Thyroid gland (tissue), 4 donors: ENCODE measurements at regions of chr19 and their contacts with region 1.

Region 1: GRCh38 chr19:37564624-37565369 is 29.8 kb downstream of the ZNF571 start:
- DNase-seq: no peak
- H3K4me3 ChIP-seq: no peak overlapping the region
- H3K27ac ChIP-seq: no peak overlapping the region
- H3K4me1 ChIP-seq: no peaks in the 10 kb centered on the region
- H3K27me3 ChIP-seq: no peaks in the 10 kb centered on the region
- CTCF ChIP-seq: no peak
- POLR2A ChIP-seq: no peak

Region 2: GRCh38 chr19:36891768-36892357 is 672.9 kb before region 1 on chr19:
- intact Hi-C with region 1: loop called (anchors 5 kb)
- DNase-seq: no peak
- H3K4me3 ChIP-seq: no peak overlapping the region
- H3K27ac ChIP-seq: no peak overlapping the region
- H3K4me1 ChIP-seq: no peaks in the 10 kb centered on the region
- H3K27me3 ChIP-seq: no peaks in the 10 kb centered on the region
- CTCF ChIP-seq: no peak
- POLR2A ChIP-seq: no peak

Region 3: DNA sequence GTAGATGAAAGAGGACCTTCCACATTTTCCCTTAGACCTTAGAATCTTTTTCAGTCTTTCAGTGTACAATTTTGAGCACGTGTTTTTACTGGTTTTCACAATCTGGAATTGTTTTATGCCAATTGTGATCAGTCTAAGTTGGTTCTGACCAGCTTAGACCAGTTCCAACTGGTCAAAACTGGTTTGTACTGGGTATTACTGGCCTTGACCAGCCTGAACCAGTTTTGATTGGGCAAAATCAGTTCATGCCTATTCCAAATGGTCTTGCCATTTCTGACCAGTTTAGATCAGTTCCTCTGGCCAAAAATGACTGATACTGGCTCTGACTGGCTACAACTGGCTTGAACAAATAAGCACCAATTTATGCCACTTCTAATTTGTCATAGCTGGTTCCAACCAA is 428.7 kb before region 1 on chr19:
- intact Hi-C with region 1: loop called (anchors 10 kb)
- DNase-seq: no peak
- H3K4me3 ChIP-seq: no peak overlapping the region
- H3K27ac ChIP-seq: no peak overlapping the region
- H3K4me1 ChIP-seq: no peaks in the 10 kb centered on the region
- H3K27me3 ChIP-seq: no peaks in the 10 kb centered on the region
- CTCF ChIP-seq: no peak
- POLR2A ChIP-seq: no peak